K562 (cell line): ENCODE measurements at regions of chr9 and their contacts with region 1.

Region 1: DNA sequence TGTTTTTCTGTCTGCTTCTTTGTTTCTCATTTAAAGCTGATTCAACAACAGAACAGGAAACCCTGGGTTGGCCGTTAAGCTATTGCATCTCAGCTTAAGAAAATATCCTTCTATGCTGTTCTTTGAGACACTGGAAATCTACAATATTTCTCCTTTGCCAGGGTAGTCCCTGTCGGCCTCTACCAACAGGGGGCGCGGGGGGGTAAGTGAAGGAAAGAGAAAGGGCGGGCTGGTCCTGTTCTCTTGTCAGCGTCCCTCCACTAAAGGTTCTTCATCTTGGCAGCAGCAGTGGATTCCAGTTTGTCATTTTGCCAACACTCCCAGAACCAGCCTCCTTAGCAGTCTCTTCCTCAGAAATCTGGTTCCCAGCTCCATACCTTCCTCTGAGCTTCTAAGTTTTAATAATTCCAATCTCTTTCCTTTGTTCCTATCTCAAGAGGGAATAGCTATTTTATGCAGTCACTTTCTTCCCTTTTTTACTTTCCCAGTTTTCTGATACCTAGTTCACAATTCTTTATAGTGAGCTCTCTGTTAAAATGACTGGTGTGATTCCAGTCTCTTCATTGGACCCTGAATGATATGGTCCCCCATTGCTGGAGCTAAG is 222.3 kb downstream of the GLIS3 start:
- DNase-seq: peak; percentile 19 to 42 (median 28)
- ATAC-seq: peak; percentile 84
- H3K4me3 ChIP-seq: no peak overlapping the region
- H3K27ac ChIP-seq: no peak overlapping the region
- H3K4me1 ChIP-seq: no peaks in the 10 kb centered on the region
- H3K27me3 ChIP-seq: no peaks in the 10 kb centered on the region
- CTCF ChIP-seq: peak; percentile 51 to 64 (median 57)
- EP300 ChIP-seq: no peak
- POLR2A ChIP-seq: no peak
- RAD21 ChIP-seq: no peak

Region 2: GRCh38 chr9:4228606-4229005 is 151.0 kb after region 1 on chr9:
- CTCF ChIA-PET with region 1: no interaction called
- POLR2A ChIA-PET with region 1: no interaction called
- in situ Hi-C with region 1: no loop called
- intact Hi-C with region 1: loop called (anchors 5 kb)
- DNase-seq: no peak
- ATAC-seq: peak; percentile 59; the same call in 2 of the 3 replicates
- H3K4me3 ChIP-seq: no peak overlapping the region
- H3K27ac ChIP-seq: no peak overlapping the region
- H3K4me1 ChIP-seq: no peaks in the 10 kb centered on the region
- H3K27me3 ChIP-seq: no peaks in the 10 kb centered on the region
- CTCF ChIP-seq: peak; percentile 9 to 18 (median 13); a peak in 2 of 6 replicates
- EP300 ChIP-seq: no peak
- POLR2A ChIP-seq: no peak
- RAD21 ChIP-seq: no peak